Aorta (tissue), 5 donors: ENCODE measurements at regions of chr17 and their contacts with region 1.

Region 1: GRCh38 chr17:49659661-49660382 is 18.1 kb downstream of the SPOP start:
- DNase-seq: no peak
- ATAC-seq: no peak
- H3K4me3 ChIP-seq: no peak overlapping the region
- H3K27ac ChIP-seq: no peak overlapping the region
- H3K4me1 ChIP-seq: peaks cover 5 to 11% of the 10 kb centered on the region in 2 donors
- H3K27me3 ChIP-seq: no peaks in the 10 kb centered on the region

Region 2: DNA sequence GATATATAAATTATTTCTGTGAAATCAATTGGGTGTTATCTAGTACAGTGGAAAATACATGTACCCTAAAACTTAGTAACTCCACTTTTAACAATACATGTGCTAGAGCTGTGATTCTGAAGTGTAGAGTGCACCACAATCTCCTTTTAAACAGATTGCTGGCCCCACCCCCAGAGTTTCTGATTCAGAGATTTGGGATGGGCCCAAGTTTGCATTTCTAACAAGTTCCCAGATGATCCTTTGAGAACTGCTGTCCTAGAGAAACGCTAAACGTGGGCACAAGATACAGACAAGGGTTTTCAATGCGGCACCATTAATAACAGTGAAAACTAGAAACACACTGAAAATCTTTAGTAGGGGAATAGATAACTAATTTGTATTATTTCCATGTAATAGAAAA is 34.9 kb before region 1 on chr17:
- intact Hi-C with region 1: loop called in 1 of 2 experiments (anchors 5 kb)
- DNase-seq: peak in 1 of 2 donors; percentile 65
- ATAC-seq: no peak
- H3K4me3 ChIP-seq: no peak overlapping the region
- H3K27ac ChIP-seq: peak overlapping the region in 1 of 2 donors; percentile 38
- H3K4me1 ChIP-seq: peaks cover 3 to 14% of the 10 kb centered on the region in 2 donors
- H3K27me3 ChIP-seq: no peaks in the 10 kb centered on the region